Activated CD4-positive, alpha-beta memory T cell treated with anti-CD3 and anti-CD28 coated beads, Interleukin-2, amount 10 ng/mL, durations not matched to agents 7 days and 5 days (primary cell): ENCODE measurements at regions of chr15 and their contacts with region 1.

Region 1: DNA sequence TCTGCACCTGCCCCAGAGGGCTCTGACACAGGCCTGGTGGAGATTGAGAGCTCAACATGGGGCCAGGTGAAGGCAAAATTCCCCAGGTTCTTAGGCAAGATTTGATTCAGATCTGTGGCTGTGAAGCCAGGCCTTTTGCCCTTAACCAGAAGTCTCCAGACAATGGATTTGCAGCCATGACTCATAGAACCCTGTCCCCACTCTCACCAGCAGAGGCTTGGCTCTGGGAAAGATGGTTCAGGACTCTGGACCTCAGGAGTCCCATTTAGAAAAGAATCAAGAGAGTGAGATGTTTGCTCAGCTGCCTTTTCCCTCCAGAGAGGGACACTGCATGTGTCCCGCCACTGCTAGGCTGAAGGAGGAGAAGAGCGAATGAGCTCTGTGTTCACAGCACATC is 361.4 kb upstream of the ICE2 start:
- DNase-seq: no peak
- H3K4me3 Mint-ChIP-seq: peak overlapping the region; percentile 53
- H3K27ac Mint-ChIP-seq: peak overlapping the region; percentile 84
- H3K4me1 Mint-ChIP-seq: peaks cover 56% of the 10 kb centered on the region
- H3K27me3 Mint-ChIP-seq: peaks cover 63% of the 10 kb centered on the region

Region 2: GRCh38 chr15:60649845-60650548 is 190.3 kb before region 1 on chr15:
- CTCF ChIA-PET with region 1: no interaction called
- POLR2A ChIA-PET with region 1: interaction called, 10 read pairs
- DNase-seq: peak; percentile 39
- H3K4me3 Mint-ChIP-seq: peak overlapping the region; percentile 42
- H3K27ac Mint-ChIP-seq: peak overlapping the region; percentile 70
- H3K4me1 Mint-ChIP-seq: peaks cover 38% of the 10 kb centered on the region
- H3K27me3 Mint-ChIP-seq: peaks cover 1% of the 10 kb centered on the region

Region 3: GRCh38 chr15:60720493-60721256 is 119.6 kb before region 1 on chr15:
- CTCF ChIA-PET with region 1: no interaction called
- POLR2A ChIA-PET with region 1: interaction called, 14 read pairs
- DNase-seq: peak; percentile 46
- H3K4me3 Mint-ChIP-seq: peak overlapping the region; percentile 48
- H3K27ac Mint-ChIP-seq: peak overlapping the region; percentile 73
- H3K4me1 Mint-ChIP-seq: peaks cover 43% of the 10 kb centered on the region
- H3K27me3 Mint-ChIP-seq: peaks cover 2% of the 10 kb centered on the region